Right cardiac atrium (tissue), 5 donors: ENCODE measurements at regions of chr18 and their contacts with region 1.

Region 1: GRCh38 chr18:616380-616995 is 19.7 kb downstream of the CLUL1 start:
- DNase-seq: no peak
- ATAC-seq: peak; percentile 64 to 75
- H3K4me3 ChIP-seq: no peak overlapping the region
- H3K27ac ChIP-seq: no peak overlapping the region
- H3K4me1 ChIP-seq: no peaks in the 10 kb centered on the region
- H3K27me3 ChIP-seq: no peaks in the 10 kb centered on the region

Region 2: DNA sequence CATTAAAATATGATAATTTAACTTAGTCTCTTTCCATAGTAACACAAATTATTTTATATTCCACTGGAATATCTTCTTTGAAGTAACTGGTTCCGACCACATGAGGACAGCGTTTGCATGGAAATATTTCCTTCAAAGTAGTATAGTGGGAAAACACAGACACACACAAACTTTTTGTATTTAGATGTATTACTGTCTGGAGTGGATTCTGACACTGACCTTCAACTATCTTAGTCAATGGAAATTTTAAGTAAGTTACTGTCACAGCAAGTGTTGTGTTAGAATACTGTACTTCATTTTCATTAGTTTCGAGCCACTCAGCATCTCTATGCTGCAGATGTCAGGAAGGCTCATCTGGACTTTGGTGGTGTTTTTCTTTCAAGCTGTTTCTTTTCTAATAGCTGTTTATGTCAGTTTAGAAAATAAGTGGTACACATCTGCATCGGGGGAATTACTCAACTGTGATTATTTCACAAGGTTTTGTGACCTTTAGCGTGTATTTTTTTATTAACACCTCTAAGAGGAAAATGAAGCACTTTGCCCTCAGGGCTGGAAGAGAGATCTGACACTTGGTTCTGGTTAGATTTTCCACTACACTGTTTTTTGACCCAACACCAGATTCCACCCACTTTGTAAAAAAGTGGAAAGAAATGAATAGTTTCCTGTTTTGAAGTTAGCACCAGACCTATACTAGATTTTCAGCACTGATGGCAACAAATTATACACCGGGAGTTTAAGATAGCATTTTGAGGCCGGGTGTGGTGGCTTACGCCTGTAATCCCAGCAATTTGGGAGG is 329.8 kb before region 1 on chr18:
- intact Hi-C with region 1: loop called (anchors 5 to 10 kb)
- DNase-seq: no peak
- ATAC-seq: peak in 1 of 2 donors; percentile 45
- H3K4me3 ChIP-seq: no peak overlapping the region
- H3K27ac ChIP-seq: no peak overlapping the region
- H3K4me1 ChIP-seq: no peaks in the 10 kb centered on the region
- H3K27me3 ChIP-seq: no peaks in the 10 kb centered on the region

Region 3: DNA sequence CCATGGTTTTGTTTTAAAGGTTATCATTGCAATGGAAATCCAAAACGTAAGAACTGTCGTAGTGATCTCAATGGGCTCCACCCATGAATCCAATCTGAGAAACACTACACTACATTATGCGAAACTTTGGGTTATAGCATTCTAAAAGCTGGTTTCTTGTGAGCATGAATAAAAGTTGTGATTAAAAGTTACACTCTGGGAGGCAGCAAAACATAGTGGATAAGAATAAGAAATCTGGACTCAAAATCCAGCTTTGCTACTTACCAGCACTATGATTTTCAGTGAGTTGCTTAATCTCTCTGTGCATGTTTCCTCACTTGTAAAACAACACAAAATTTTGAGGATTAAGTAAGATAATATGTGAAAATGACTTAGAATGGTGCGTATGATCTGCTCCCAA is 323.0 kb before region 1 on chr18:
- intact Hi-C with region 1: loop called (anchors 5 to 10 kb)
- DNase-seq: no peak
- ATAC-seq: peak in 1 of 2 donors; percentile 40
- H3K4me3 ChIP-seq: no peak overlapping the region
- H3K27ac ChIP-seq: no peak overlapping the region
- H3K4me1 ChIP-seq: no peaks in the 10 kb centered on the region
- H3K27me3 ChIP-seq: no peaks in the 10 kb centered on the region

Region 4: GRCh38 chr18:457140-457519 is 159.4 kb before region 1 on chr18:
- intact Hi-C with region 1: loop called in 1 of 4 experiments (anchors 10 kb)
- DNase-seq: peak; percentile 50 to 80 (median 80)
- ATAC-seq: peak; percentile 89 to 90
- H3K4me3 ChIP-seq: peak overlapping the region; percentile 14
- H3K27ac ChIP-seq: peak overlapping the region; percentile 40
- H3K4me1 ChIP-seq: no peaks in the 10 kb centered on the region
- H3K27me3 ChIP-seq: no peaks in the 10 kb centered on the region

Region 5: GRCh38 chr18:676069-676468 is 59.6 kb after region 1 on chr18:
- intact Hi-C with region 1: no loop called
- DNase-seq: peak in 2 of 3 donors; percentile 55 to 63
- ATAC-seq: peak in 1 of 2 donors; percentile 26
- H3K4me3 ChIP-seq: no peak overlapping the region
- H3K27ac ChIP-seq: no peak overlapping the region
- H3K4me1 ChIP-seq: no peaks in the 10 kb centered on the region
- H3K27me3 ChIP-seq: no peaks in the 10 kb centered on the region